Caco-2 (cell line): ENCODE measurements at regions of chr12 and their contacts with region 1.

Region 1: GRCh38 chr12:62603061-62603810 is 136.6 kb downstream of the MON2 start:
- DNase-seq: peak; percentile 85 to 91
- H3K4me3 ChIP-seq: peak overlapping the region; percentile 93
- H3K4me3 Mint-ChIP-seq: peak overlapping the region; percentile 95
- H3K27ac Mint-ChIP-seq: peak overlapping the region; percentile 100
- H3K4me1 ChIP-seq: peaks cover 23% of the 10 kb centered on the region
- H3K4me1 Mint-ChIP-seq: peaks cover 9% of the 10 kb centered on the region
- H3K27me3 ChIP-seq: no peaks in the 10 kb centered on the region
- H3K27me3 Mint-ChIP-seq: no peaks in the 10 kb centered on the region
- CTCF ChIP-seq: peak in 1 of 2 experiments; percentile 58

Region 2: DNA sequence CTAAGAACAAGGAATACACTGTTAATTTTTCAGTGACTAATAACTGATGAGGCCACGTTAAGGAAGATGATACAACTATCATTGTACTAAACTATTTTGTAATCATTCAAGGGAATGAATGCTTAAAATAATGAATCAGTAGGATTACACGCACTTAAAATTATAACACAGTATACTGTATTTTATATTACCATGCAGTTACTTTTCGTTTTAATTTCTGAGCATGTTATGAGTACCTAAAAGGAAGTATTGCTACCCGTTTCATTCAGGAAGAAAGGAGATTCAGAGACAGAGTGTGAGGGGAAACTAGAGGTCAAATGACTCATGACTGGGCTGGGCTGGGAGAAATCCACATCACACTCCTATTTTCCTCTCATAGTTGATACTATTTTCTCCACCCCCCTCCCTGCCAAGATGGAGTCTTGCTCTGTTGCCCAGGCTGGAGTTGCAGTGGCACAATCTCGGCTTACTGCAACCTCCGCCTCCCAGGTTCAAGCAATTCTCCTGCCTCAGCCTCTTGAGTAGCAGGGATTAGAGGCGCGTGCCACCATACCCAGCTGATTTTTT is 129.7 kb after region 1 on chr12:
- CTCF ChIA-PET with region 1: interaction called, 4 read pairs
- POLR2A ChIA-PET with region 1: no interaction called
- intact Hi-C with region 1: loop called (anchors 2 kb)
- DNase-seq: no peak
- H3K4me3 ChIP-seq: no peak overlapping the region
- H3K4me3 Mint-ChIP-seq: no peak overlapping the region
- H3K27ac Mint-ChIP-seq: peak overlapping the region; percentile 53
- H3K4me1 ChIP-seq: peaks cover 49% of the 10 kb centered on the region
- H3K4me1 Mint-ChIP-seq: peaks cover 48% of the 10 kb centered on the region
- H3K27me3 ChIP-seq: no peaks in the 10 kb centered on the region
- H3K27me3 Mint-ChIP-seq: no peaks in the 10 kb centered on the region
- CTCF ChIP-seq: no peak

Region 3: GRCh38 chr12:62799126-62799736 is 196.0 kb after region 1 on chr12:
- CTCF ChIA-PET with region 1: interaction called, 7 read pairs
- POLR2A ChIA-PET with region 1: no interaction called
- intact Hi-C with region 1: loop called (anchors 1 kb)
- DNase-seq: peak; percentile 73 to 78
- H3K4me3 ChIP-seq: no peak overlapping the region
- H3K4me3 Mint-ChIP-seq: no peak overlapping the region
- H3K27ac Mint-ChIP-seq: peak overlapping the region; percentile 80
- H3K4me1 ChIP-seq: peaks cover 64% of the 10 kb centered on the region
- H3K4me1 Mint-ChIP-seq: peaks cover 37% of the 10 kb centered on the region
- H3K27me3 ChIP-seq: no peaks in the 10 kb centered on the region
- H3K27me3 Mint-ChIP-seq: no peaks in the 10 kb centered on the region
- CTCF ChIP-seq: peak; percentile 79 to 86